ENCODE measurements at regions of chr10 and their contacts with region 1.

Region 1: DNA sequence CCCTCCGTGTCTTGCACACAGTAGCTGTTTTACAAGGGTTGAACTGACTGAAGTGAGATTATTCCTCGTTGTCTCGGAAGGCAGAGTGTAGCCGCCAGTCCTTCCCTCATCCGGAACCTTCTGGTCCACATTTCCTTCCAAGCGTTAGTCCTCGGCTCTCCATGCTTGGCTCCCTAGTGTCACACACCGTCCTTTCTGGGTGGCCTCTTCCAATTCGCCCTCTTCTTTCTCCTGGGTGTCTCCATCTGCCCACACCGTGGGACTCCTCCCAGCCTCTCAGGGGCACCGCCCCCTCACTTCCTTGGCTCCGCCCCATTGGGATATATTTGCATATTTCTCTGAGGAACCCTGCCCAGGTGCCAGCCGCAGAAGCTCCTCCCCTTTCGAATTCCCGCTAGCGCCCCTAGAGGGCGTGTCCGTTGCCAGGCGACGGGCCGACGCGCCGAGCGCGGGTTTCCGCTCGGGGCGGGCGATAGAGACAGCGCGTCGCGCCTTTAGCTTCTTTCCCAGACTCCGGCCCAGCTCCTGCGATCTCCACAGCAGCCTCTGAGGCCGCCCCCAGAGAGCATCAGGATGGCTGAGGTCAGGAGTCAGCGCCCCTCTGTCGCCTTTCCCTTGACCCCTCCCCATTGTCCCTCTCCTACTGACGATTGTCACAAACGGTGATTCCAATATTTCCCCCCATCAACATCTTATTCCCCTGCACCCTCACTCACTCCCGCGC is at the start of gene CFAP58:
- DNase-seq: peak; percentile 94
- H3K4me3 ChIP-seq: peak within 1 kb of the TSS; percentile 17 to 20
- H3K27ac ChIP-seq: peak within 1 kb of the TSS; percentile 21 to 48
- H3K4me1 ChIP-seq: no peaks in the 10 kb centered on the region
- H3K27me3 ChIP-seq: no peaks in the 10 kb centered on the region
- CTCF ChIP-seq: peak; percentile 69 to 94 (median 82)
- POLR2A ChIP-seq: peak; percentile 66
- total RNA-seq, gene CFAP58: 0.05 to 1.9 TPM

Region 2: GRCh38 chr10:104139221-104139620 is 214.3 kb before region 1 on chr10:
- intact Hi-C with region 1: no loop called
- DNase-seq: no peak
- H3K4me3 ChIP-seq: no peak overlapping the region
- H3K27ac ChIP-seq: no peak overlapping the region
- H3K4me1 ChIP-seq: no peaks in the 10 kb centered on the region
- H3K27me3 ChIP-seq: no peaks in the 10 kb centered on the region
- CTCF ChIP-seq: no peak
- POLR2A ChIP-seq: no peak

Region 3: GRCh38 chr10:104291439-104291951 is 62.0 kb before region 1 on chr10:
- intact Hi-C with region 1: loop called (anchors 1 kb)
- DNase-seq: peak; percentile 86
- H3K4me3 ChIP-seq: no peak overlapping the region
- H3K27ac ChIP-seq: no peak overlapping the region
- H3K4me1 ChIP-seq: peaks cover 2% of the 10 kb centered on the region
- H3K27me3 ChIP-seq: no peaks in the 10 kb centered on the region
- CTCF ChIP-seq: peak; percentile 97 to 99 (median 99)
- POLR2A ChIP-seq: no peak

Region 4: GRCh38 chr10:104308439-104308903 is 45.0 kb before region 1 on chr10:
- intact Hi-C with region 1: loop called (anchors 5 kb)
- DNase-seq: no peak
- H3K4me3 ChIP-seq: no peak overlapping the region
- H3K27ac ChIP-seq: no peak overlapping the region
- H3K4me1 ChIP-seq: peaks cover 12% of the 10 kb centered on the region
- H3K27me3 ChIP-seq: no peaks in the 10 kb centered on the region
- CTCF ChIP-seq: no peak
- POLR2A ChIP-seq: no peak